CD8-positive, alpha-beta T cell (primary cell): ENCODE measurements at regions of chr5 and their contacts with region 1.

Region 1: GRCh38 chr5:78294248-78295034 is at the start of gene AP3B1:
- DNase-seq: peak; percentile 92 to 99 (median 98)
- ATAC-seq: peak; percentile 90
- H3K4me3 ChIP-seq: peak within 1 kb of the TSS; percentile 70 to 99
- H3K4me3 Mint-ChIP-seq: peak within 1 kb of the TSS; percentile 99
- H3K27ac ChIP-seq: peak within 1 kb of the TSS; percentile 88 to 90
- H3K27ac Mint-ChIP-seq: peak within 1 kb of the TSS; percentile 98
- H3K4me1 ChIP-seq: peaks cover 30% of the 10 kb centered on the region
- H3K4me1 Mint-ChIP-seq: peaks cover 39% of the 10 kb centered on the region
- H3K27me3 ChIP-seq: peaks cover 0 to 2% of the 10 kb centered on the region in 2 experiments
- H3K27me3 Mint-ChIP-seq: no peaks in the 10 kb centered on the region
- CTCF ChIP-seq: no peak
- total RNA-seq, gene AP3B1: 24.8 to 25.0 TPM

Region 2: DNA sequence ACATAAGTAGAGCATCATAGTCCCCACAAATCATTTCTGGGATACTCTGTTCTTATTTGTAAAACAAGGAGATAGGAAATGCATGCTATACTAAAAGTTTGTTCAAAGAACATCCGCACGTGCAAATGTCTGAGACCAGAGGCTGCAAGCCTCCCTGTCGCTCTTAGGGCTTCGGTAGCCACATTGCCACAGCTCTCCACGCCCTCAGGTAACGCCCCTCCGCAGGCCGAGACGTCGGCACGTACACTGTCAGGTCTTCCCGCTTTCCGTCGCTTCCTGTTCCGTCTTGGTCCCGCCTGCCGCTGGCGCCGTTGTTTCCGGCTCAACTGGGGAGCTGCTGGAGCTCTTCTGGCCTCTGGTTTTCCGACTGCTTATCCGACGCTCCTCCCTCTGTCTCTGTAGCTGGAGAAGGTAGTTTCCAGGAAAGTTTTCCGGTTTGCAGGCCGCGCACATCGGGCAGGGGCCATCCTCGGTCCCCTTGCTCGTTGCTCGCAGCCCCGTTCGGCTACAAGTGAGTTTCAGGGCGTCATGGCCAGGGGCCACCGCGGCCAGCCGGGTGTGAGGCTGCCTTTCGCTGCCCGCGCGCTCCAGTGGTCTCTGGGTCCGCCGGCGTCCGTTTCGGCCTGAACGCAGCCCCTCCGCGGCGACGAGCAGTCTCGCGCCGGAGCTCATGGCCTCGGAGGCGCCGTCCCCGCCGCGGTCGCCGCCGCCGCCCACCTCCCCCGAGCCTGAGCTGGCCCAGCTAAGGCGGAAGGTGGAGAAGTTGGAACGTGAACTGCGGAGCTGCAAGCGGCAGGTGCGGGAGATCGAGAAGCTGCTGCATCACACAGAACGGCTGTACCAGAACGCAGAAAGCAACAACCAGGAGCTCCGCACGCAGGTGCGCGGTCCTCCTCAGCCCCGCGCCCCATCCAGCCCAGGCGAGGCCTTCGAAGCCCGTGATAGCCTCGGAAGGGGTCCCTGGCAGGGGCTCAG is 1264.1 kb before region 1 on chr5 and contains the start of gene AGGF1:
- CTCF ChIA-PET with region 1: no interaction called
- POLR2A ChIA-PET with region 1: no interaction called
- intact Hi-C with region 1: loop called in 1 of 2 experiments (anchors 5 kb)
- DNase-seq: peak; percentile 78 to 95 (median 92)
- ATAC-seq: peak; percentile 98
- H3K4me3 ChIP-seq: peak within 1 kb of the TSS; percentile 84 to 94
- H3K4me3 Mint-ChIP-seq: peak within 1 kb of the TSS; percentile 90
- H3K27ac ChIP-seq: peak within 1 kb of the TSS; percentile 69 to 85
- H3K27ac Mint-ChIP-seq: peak within 1 kb of the TSS; percentile 94
- H3K4me1 ChIP-seq: peaks cover 21% of the 10 kb centered on the region
- H3K4me1 Mint-ChIP-seq: peaks cover 43% of the 10 kb centered on the region
- H3K27me3 ChIP-seq: no peaks in the 10 kb centered on the region
- H3K27me3 Mint-ChIP-seq: no peaks in the 10 kb centered on the region
- CTCF ChIP-seq: no peak
- total RNA-seq, gene AGGF1: 14.8 to 14.9 TPM

Region 3: DNA sequence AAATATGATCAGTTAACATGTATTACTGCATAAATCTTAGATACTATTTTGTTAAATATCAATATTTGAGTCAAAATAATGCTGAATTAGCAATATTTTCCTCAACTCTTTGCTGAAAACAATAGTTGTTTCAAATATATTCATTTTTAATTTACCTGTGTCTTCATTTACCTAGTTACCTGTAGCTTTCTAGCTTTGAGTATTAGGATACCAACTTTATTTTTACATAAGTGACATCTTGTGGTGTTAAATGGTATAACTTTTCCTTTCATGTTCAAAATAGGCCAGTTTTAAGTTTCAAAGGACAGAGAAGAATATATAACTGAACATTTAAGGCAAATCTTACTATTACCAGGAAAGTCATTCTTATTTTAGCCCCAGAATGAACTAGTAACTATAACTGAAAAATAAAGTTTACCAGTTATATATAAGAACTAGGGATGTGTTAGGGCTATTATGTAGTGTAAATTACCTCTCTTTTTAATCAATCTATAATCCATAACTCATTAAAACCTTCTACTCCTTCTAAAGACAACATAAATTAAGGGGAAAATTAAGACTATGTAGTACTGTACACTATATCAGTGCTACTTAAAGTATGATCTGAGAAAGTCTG is 25.2 kb before region 1 on chr5:
- CTCF ChIA-PET with region 1: no interaction called
- POLR2A ChIA-PET with region 1: interaction called, 4 read pairs
- intact Hi-C with region 1: loop called in 1 of 2 experiments (anchors 2 kb)
- DNase-seq: peak in 2 of 9 experiments; percentile 15 to 41
- ATAC-seq: peak; percentile 57
- H3K4me3 ChIP-seq: no peak overlapping the region
- H3K4me3 Mint-ChIP-seq: no peak overlapping the region
- H3K27ac ChIP-seq: no peak overlapping the region
- H3K27ac Mint-ChIP-seq: no peak overlapping the region
- H3K4me1 ChIP-seq: no peaks in the 10 kb centered on the region
- H3K4me1 Mint-ChIP-seq: peaks cover 30% of the 10 kb centered on the region
- H3K27me3 ChIP-seq: no peaks in the 10 kb centered on the region
- H3K27me3 Mint-ChIP-seq: no peaks in the 10 kb centered on the region
- CTCF ChIP-seq: peak; percentile 83

Region 4: GRCh38 chr5:78984439-78985115 is 690.1 kb after region 1 on chr5:
- CTCF ChIA-PET with region 1: no interaction called
- POLR2A ChIA-PET with region 1: no interaction called
- intact Hi-C with region 1: loop called (anchors 2 to 10 kb)
- DNase-seq: peak; percentile 55 to 90 (median 75)
- ATAC-seq: peak; percentile 74
- H3K4me3 ChIP-seq: peak overlapping the region; percentile 54 to 68
- H3K4me3 Mint-ChIP-seq: peak overlapping the region; percentile 94
- H3K27ac ChIP-seq: peak overlapping the region; percentile 40 to 75
- H3K27ac Mint-ChIP-seq: peak overlapping the region; percentile 92
- H3K4me1 ChIP-seq: peaks cover 14% of the 10 kb centered on the region
- H3K4me1 Mint-ChIP-seq: peaks cover 28% of the 10 kb centered on the region
- H3K27me3 ChIP-seq: no peaks in the 10 kb centered on the region
- H3K27me3 Mint-ChIP-seq: no peaks in the 10 kb centered on the region
- CTCF ChIP-seq: no peak

Region 5: DNA sequence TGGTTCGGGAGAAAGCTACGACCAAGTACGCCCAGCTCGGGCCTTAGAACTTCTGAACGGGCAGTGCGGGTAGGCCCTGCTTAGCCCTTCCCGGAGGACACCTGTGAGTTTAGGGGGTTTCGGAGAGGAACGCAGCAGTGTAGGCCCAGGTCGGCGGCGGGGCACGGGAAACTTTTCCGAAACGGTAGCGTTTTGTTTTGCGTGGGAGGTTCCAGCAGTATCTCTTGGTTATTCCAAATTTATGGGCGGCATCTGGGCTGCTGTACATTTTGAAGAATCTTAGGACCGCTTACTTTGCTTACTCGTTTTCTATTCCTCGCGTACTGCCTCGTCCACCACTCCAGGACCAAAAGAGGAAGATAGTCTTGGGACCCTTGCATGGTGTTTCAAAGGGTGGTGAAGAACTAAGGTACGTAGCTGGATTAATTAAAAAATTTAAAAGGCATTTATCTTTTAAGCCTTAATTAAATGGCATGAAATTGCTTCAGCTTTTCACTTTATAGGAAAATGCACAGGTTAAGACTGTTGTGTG is 1318.3 kb after region 1 on chr5:
- CTCF ChIA-PET with region 1: no interaction called
- POLR2A ChIA-PET with region 1: no interaction called
- intact Hi-C with region 1: loop called in 1 of 2 experiments (anchors 5 kb)
- DNase-seq: no peak
- ATAC-seq: no peak
- H3K4me3 ChIP-seq: peak overlapping the region; percentile 71 to 97
- H3K4me3 Mint-ChIP-seq: peak overlapping the region; percentile 96
- H3K27ac ChIP-seq: peak overlapping the region; percentile 89 to 91
- H3K27ac Mint-ChIP-seq: peak overlapping the region; percentile 98
- H3K4me1 ChIP-seq: peaks cover 26% of the 10 kb centered on the region
- H3K4me1 Mint-ChIP-seq: peaks cover 39% of the 10 kb centered on the region
- H3K27me3 ChIP-seq: no peaks in the 10 kb centered on the region
- H3K27me3 Mint-ChIP-seq: peaks cover 9% of the 10 kb centered on the region
- CTCF ChIP-seq: no peak